Naive thymus-derived CD4-positive, alpha-beta T cell (primary cell): ENCODE measurements at regions of chrX and their contacts with region 1.

Region 1: GRCh38 chrX:150568320-150569154 is at the start of gene MTM1:
- DNase-seq: peak; percentile 80 to 93 (median 90)
- ATAC-seq: peak; percentile 96
- H3K4me3 ChIP-seq: peak within 1 kb of the TSS; percentile 71
- H3K4me3 Mint-ChIP-seq: peak within 1 kb of the TSS; percentile 68 to 92 (median 90)
- H3K27ac ChIP-seq: peak within 1 kb of the TSS; percentile 75
- H3K27ac Mint-ChIP-seq: peak within 1 kb of the TSS; percentile 81 to 92 (median 89)
- H3K4me1 ChIP-seq: peaks cover 31 to 36% of the 10 kb centered on the region in 2 donors
- H3K4me1 Mint-ChIP-seq: peaks cover 6 to 45% (median 41%) of the 10 kb centered on the region in 7 donors
- H3K27me3 ChIP-seq: no peaks in the 10 kb centered on the region
- H3K27me3 Mint-ChIP-seq: no peaks in the 10 kb centered on the region
- total RNA-seq, gene MTM1: 21.8 to 34.7 (median 28.8) TPM

Region 2: GRCh38 chrX:149631234-149632165 is 937.0 kb before region 1 on chrX and contains the start of gene TMEM185A:
- CTCF ChIA-PET with region 1: no interaction called
- POLR2A ChIA-PET with region 1: no interaction called
- intact Hi-C with region 1: loop called in 1 of 2 experiments (anchors 10 kb)
- DNase-seq: peak; percentile 48 to 79 (median 71)
- ATAC-seq: peak; percentile 92
- H3K4me3 ChIP-seq: peak within 1 kb of the TSS; percentile 68
- H3K4me3 Mint-ChIP-seq: peak within 1 kb of the TSS; percentile 84 to 98 (median 92)
- H3K27ac ChIP-seq: peak within 1 kb of the TSS; percentile 72
- H3K27ac Mint-ChIP-seq: peak within 1 kb of the TSS; percentile 78 to 94 (median 83)
- H3K4me1 ChIP-seq: peaks cover 12% of the 10 kb centered on the region in 2 donors
- H3K4me1 Mint-ChIP-seq: peaks cover 29 to 43% (median 39%) of the 10 kb centered on the region in 7 donors
- H3K27me3 ChIP-seq: no peaks in the 10 kb centered on the region
- H3K27me3 Mint-ChIP-seq: peaks cover 0 to 9% (median 0%) of the 10 kb centered on the region in 5 donors
- total RNA-seq, gene TMEM185A: 11.9 to 23.4 (median 19.9) TPM

Region 3: DNA sequence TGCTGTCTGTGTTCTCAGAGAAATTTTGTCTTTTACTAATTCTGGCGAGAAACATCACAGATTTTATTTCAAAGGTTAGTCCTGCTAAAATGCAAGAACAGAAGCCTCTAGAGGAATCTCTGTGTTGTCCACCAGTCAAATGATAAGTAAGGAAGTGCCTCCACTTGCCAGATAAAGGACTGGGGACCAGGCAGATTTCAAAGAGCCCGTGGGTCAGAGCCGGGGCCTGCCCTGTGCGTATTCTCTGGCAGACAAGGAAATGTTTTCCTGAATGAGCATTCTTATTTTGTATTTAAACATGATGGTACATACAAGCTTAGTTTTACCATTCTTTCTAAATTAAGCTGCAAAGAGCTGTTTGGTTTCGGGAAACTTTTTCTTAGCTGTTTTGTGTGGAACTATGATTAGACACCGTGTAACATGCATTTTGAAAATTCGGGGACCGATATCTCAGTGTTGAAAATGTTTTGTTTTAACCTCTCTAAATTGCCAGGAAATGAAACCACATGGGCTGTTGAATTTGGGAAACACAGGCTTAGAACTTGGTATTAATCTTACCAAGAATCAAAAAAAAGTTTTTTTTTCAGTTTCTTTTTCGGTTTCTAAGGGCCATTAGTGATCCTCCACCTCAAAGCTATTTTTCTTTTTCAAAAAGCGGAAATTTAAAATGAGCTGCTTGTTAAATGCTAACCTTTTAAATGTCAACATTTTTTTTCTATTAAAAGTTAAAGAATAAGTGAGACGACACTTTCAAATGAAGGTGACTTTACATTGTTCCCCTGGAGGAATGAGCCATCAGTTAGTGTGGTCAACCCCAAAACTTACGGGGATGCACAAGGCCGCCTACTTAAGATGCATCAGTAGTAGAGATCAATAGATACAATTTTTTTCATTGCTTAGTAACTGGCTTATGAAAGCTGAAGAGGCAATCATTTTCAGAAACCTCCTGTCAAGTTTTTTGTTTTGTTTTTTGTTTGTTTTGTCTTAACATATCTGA is 89.7 kb before region 1 on chrX:
- CTCF ChIA-PET with region 1: no interaction called
- POLR2A ChIA-PET with region 1: no interaction called
- intact Hi-C with region 1: loop called in 1 of 2 experiments (anchors 2 kb)
- DNase-seq: peak in 4 of 9 donors; percentile 4 to 31 (median 24)
- ATAC-seq: peak; percentile 46
- H3K4me3 ChIP-seq: peak overlapping the region; percentile 46
- H3K4me3 Mint-ChIP-seq: peak overlapping the region; percentile 51 to 81 (median 76)
- H3K27ac ChIP-seq: peak overlapping the region; percentile 41
- H3K27ac Mint-ChIP-seq: peak overlapping the region in 8 of 9 donors; percentile 84 to 97 (median 85)
- H3K4me1 ChIP-seq: peaks cover 3 to 14% of the 10 kb centered on the region in 2 donors
- H3K4me1 Mint-ChIP-seq: peaks cover 6 to 67% (median 34%) of the 10 kb centered on the region in 7 donors
- H3K27me3 ChIP-seq: no peaks in the 10 kb centered on the region
- H3K27me3 Mint-ChIP-seq: no peaks in the 10 kb centered on the region

Region 4: GRCh38 chrX:150547375-150548115 is 21.0 kb before region 1 on chrX:
- CTCF ChIA-PET with region 1: interaction called, 5 read pairs
- POLR2A ChIA-PET with region 1: interaction called, 52 read pairs
- intact Hi-C with region 1: loop called (anchors 1 to 2 kb)
- DNase-seq: peak in 1 of 9 donors; percentile 25
- ATAC-seq: peak; percentile 53
- H3K4me3 ChIP-seq: peak overlapping the region; percentile 43
- H3K4me3 Mint-ChIP-seq: peak overlapping the region; percentile 74 to 91 (median 82)
- H3K27ac ChIP-seq: peak overlapping the region; percentile 14
- H3K27ac Mint-ChIP-seq: peak overlapping the region in 7 of 9 donors; percentile 52 to 96 (median 82)
- H3K4me1 ChIP-seq: peaks cover 11 to 13% of the 10 kb centered on the region in 2 donors
- H3K4me1 Mint-ChIP-seq: peaks cover 10 to 35% (median 24%) of the 10 kb centered on the region in 7 donors
- H3K27me3 ChIP-seq: no peaks in the 10 kb centered on the region
- H3K27me3 Mint-ChIP-seq: no peaks in the 10 kb centered on the region

Region 5: GRCh38 chrX:150693775-150694574 is 125.4 kb after region 1 on chrX:
- CTCF ChIA-PET with region 1: interaction called, 5 read pairs
- POLR2A ChIA-PET with region 1: interaction called, 11 read pairs
- intact Hi-C with region 1: loop called (anchors 1 to 2 kb)
- DNase-seq: peak; percentile 12 to 65 (median 51)
- ATAC-seq: peak; percentile 62
- H3K4me3 ChIP-seq: peak overlapping the region; percentile 61
- H3K4me3 Mint-ChIP-seq: peak overlapping the region; percentile 85 to 98 (median 94)
- H3K27ac ChIP-seq: peak overlapping the region; percentile 80
- H3K27ac Mint-ChIP-seq: peak overlapping the region; percentile 95 to 99 (median 97)
- H3K4me1 ChIP-seq: peaks cover 37 to 42% of the 10 kb centered on the region in 2 donors
- H3K4me1 Mint-ChIP-seq: peaks cover 25 to 68% (median 61%) of the 10 kb centered on the region in 7 donors
- H3K27me3 ChIP-seq: no peaks in the 10 kb centered on the region
- H3K27me3 Mint-ChIP-seq: no peaks in the 10 kb centered on the region

Region 6: GRCh38 chrX:150772150-150772970 is 203.8 kb after region 1 on chrX:
- CTCF ChIA-PET with region 1: no interaction called
- POLR2A ChIA-PET with region 1: no interaction called
- intact Hi-C with region 1: no loop called
- DNase-seq: peak; percentile 34 to 80 (median 61)
- ATAC-seq: peak; percentile 86
- H3K4me3 ChIP-seq: no peak overlapping the region
- H3K4me3 Mint-ChIP-seq: no peak overlapping the region
- H3K27ac ChIP-seq: no peak overlapping the region
- H3K27ac Mint-ChIP-seq: peak overlapping the region in 1 of 9 donors; percentile 62
- H3K4me1 ChIP-seq: no peaks in the 10 kb centered on the region
- H3K4me1 Mint-ChIP-seq: peaks cover 0 to 3% (median 0%) of the 10 kb centered on the region in 7 donors
- H3K27me3 ChIP-seq: no peaks in the 10 kb centered on the region
- H3K27me3 Mint-ChIP-seq: no peaks in the 10 kb centered on the region

Region 7: DNA sequence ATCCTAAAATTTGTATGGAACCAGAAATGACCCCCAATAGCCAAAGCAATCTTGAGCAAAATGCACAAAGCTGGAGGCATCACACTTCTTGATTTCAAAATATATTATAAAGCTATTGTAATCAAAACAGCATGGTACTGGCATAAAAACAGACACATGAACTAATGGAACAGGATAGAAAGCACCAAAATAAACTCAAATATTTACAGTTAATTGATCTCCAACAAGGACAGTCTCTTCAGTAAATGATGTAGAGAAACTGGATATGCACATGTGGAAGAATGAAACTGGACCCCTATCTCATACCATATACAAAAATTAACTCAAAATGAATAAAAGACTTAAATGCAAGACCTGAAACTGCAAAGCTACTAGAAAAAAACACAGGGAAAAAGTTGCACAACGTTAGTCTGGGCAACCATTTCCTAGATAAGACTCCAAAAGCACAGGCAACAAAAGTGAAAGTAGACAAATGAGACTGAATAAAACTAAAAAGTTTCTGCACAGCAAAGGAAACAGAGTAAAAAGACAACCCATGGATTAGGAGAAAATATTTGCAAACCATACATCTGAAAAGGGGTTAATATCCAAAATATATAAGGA is 265.0 kb after region 1 on chrX:
- CTCF ChIA-PET with region 1: no interaction called
- POLR2A ChIA-PET with region 1: no interaction called
- intact Hi-C with region 1: no loop called
- DNase-seq: no peak
- ATAC-seq: no peak
- H3K4me3 ChIP-seq: no peak overlapping the region
- H3K4me3 Mint-ChIP-seq: peak overlapping the region in 1 of 10 donors; percentile 34
- H3K27ac ChIP-seq: no peak overlapping the region
- H3K27ac Mint-ChIP-seq: no peak overlapping the region
- H3K4me1 ChIP-seq: no peaks in the 10 kb centered on the region
- H3K4me1 Mint-ChIP-seq: peaks cover 0 to 9% (median 4%) of the 10 kb centered on the region in 7 donors
- H3K27me3 ChIP-seq: no peaks in the 10 kb centered on the region
- H3K27me3 Mint-ChIP-seq: no peaks in the 10 kb centered on the region